Natural killer cell (primary cell): ENCODE measurements at regions of chr15 and their contacts with region 1.

Region 1: GRCh38 chr15:85794603-85795336 is at the start of gene KLHL25:
- DNase-seq: peak; percentile 86 to 96
- ATAC-seq: peak; percentile 96 to 98 (median 96)
- H3K4me3 ChIP-seq: peak within 1 kb of the TSS; percentile 64
- H3K4me3 Mint-ChIP-seq: peak within 1 kb of the TSS; percentile 94
- H3K27ac ChIP-seq: peak within 1 kb of the TSS; percentile 32
- H3K27ac Mint-ChIP-seq: peak within 1 kb of the TSS; percentile 72 to 88
- H3K4me1 ChIP-seq: peaks cover 25% of the 10 kb centered on the region
- H3K4me1 Mint-ChIP-seq: peaks cover 25 to 30% of the 10 kb centered on the region in 2 donors
- H3K27me3 ChIP-seq: no peaks in the 10 kb centered on the region
- H3K27me3 Mint-ChIP-seq: peaks cover 0 to 5% of the 10 kb centered on the region in 2 donors
- CTCF ChIP-seq: no peak
- total RNA-seq, gene KLHL25: 6.5 to 16.2 (median 10.4) TPM

Region 2: DNA sequence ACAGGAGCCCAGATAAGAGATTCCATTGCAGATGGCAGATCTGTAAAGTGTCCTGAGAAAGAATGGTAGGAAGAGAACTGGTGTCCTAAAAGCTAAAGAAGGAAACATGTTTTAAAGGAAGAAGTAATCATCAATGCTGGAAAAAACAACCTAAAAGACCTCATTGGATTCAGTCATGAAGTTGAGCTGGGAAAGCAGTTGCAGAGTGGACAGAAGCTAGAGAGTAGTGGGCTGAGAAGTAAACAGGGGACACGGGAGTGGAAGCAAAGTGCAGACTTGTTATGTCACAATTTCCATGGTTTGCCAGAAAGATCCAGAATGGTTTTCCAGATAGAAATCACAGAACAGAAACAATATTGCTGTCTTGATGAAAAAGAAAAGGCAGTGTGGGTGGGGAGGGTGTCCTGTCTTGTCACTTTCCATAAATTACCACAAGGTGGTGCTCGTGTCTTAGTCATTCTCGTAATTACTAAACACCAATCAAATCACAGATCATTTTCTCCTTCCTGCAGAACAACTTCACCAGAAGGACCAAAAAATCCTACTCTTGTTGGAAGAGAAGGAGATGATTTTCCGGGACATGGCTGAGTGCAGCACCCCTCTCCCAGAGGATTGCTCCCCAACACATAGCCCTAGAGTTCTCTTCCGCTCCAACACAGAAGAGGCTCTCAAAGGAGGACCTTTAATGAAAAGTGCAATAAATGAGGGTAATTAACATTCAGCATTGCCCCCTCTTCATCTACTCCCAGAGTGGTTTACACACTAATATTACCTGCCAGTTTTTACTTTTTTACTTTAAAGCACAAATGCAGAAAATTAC is 64.6 kb before region 1 on chr15:
- intact Hi-C with region 1: loop called (anchors 10 kb)
- DNase-seq: peak in 1 of 2 donors; percentile 85
- ATAC-seq: peak; percentile 82 to 88 (median 84)
- H3K4me3 ChIP-seq: no peak overlapping the region
- H3K4me3 Mint-ChIP-seq: no peak overlapping the region
- H3K27ac ChIP-seq: no peak overlapping the region
- H3K27ac Mint-ChIP-seq: peak overlapping the region; percentile 68 to 80
- H3K4me1 ChIP-seq: no peaks in the 10 kb centered on the region
- H3K4me1 Mint-ChIP-seq: peaks cover 9 to 22% of the 10 kb centered on the region in 2 donors
- H3K27me3 ChIP-seq: no peaks in the 10 kb centered on the region
- H3K27me3 Mint-ChIP-seq: no peaks in the 10 kb centered on the region
- CTCF ChIP-seq: peak; percentile 78